ENCODE measurements at regions of chr18 and their contacts with region 1.

Region 1: DNA sequence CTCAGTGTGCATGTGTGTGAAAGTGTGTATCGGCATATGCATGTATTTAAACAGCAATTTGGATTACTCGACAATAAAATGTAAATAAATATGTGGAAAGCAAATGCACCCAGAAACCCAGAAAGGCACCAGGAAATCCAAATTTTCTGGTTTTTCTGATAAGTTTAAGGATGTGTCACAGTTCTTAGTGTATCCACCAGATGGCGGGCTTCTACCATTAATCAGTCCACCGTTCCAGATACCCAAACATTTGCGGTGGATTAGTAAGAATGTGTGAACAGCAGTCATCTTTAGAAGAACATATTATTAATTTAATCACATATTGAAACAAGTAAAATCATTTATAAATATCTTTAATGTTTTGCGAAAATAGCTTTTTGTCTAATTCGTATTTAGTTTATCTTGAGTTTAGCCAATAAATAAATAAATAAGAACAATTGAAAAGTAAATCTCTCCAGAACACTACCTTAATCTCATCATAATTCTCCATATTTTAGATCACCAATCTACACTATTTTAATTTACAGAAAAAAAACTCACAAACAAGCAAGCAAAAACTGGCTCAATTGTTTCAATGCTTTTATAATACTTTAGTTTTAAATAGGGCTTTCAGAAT is 298.9 kb downstream of the DSEL start:
- DNase-seq: no peak
- ATAC-seq: peak; percentile 75

Region 2: GRCh38 chr18:67318651-67319050 is 101.0 kb after region 1 on chr18:
- intact Hi-C with region 1: no loop called
- DNase-seq: no peak
- ATAC-seq: no peak

Region 3: GRCh38 chr18:68172842-68173549 is 955.3 kb after region 1 on chr18:
- intact Hi-C with region 1: no loop called
- DNase-seq: no peak
- ATAC-seq: no peak

Region 4: DNA sequence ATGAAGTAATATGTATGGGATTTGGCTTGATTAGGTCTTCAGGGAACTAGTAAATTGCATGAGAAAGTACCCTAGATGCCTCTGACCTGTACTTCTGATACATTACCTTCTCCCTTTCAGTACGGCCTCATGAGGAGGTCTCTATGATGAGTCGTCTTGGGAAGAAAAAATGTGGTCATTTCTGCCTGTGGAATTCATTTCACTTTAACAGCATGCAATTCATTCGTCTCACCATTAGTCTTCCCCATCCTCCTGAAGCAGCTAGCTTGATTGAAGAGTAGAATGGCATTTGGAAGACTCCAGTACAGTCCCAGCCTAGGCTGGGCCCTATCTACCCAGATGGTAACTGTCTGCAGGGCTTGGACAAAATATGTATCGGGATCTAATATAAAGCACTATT is 1445.1 kb after region 1 on chr18:
- intact Hi-C with region 1: loop called (anchors 2 kb)
- DNase-seq: no peak
- ATAC-seq: no peak

Region 5: DNA sequence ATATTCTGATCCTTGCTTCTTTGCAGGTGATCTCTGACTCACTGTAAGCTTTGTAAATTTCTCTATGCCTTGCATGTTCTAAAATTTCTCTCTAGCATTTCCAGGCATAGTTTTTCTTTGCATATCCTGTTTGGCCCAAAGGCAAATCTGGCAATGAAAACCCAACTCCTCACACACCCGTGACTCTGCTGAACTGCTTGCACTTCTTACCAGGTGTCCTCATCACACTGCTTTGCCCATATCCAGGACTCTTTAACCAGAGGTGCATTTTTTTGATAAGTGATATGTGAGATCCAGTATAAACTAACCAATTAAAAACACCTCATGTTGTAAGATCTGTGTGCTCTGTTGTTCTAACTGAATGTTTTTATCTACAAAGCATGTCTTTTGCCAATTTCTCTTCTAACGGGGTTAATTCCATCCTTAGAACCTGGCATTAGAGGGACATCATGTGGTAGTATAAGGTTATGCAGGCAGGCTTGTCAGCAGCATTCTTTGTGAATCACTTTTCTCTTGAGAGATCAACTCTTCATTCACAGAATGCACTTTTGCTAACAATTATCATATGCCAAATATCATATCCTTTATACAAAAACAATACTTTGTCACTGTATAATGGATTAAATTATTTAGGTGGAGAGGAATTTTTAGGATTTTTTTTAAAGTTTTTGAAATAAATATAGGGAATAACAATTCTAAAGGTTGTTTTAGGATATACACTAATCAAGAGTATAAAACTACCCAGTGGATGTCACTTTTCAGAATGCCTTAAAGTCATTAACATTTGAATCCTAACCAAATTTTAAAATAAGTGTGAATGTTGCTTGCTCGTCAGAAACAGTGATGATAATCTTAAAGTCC is 1518.1 kb after region 1 on chr18:
- intact Hi-C with region 1: loop called (anchors 5 kb)
- DNase-seq: no peak
- ATAC-seq: peak; percentile 66